ENCODE measurements at regions of chr11 and their contacts with region 1.

Region 1: DNA sequence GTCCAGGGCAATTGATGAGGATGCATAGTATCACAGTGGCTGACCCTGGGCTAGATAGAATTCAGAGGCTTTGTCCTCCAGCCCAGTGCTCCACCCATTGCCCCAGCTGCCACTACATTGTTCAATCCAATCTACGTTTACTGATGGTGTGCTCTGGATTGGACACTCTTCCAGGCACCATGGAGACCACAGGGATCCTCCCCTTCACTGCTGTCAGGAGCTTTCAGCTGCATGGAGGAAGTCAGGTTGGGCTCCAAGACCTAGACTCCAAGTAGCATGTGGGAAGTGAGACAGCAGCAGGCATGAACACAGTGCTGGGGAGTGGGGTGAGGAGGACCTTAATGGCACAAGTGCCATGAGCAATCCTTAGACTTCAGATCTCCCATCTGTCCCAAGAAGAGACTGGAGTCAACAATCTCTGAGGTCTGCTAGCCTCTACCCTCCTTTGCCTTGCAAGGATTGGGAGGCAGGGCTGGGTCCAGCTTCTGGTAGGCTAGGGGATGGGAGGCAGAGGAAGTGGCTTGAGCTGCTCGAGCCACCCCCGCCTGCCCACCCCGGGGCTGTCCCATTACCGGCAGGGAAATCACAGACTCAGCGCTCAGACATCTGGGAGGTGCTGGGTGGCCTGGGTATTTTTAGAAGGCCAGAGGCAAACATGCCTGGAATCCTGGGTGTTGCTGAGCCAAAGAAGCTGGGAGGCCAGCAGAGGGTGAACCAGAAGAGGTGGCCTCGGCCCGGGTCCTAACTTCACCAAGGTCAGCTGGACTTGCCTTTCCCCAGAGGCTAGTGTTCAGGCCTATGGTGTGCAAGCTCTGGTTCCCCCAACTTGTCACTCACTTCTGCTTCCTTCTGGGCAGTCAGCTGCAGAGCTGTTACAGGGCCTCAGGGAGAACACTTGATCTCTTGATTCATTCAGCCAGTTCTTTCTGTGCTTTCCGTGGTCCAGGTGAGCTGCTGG is 15.2 kb upstream of the FCHSD2 start:
- DNase-seq: peak; percentile 43
- H3K4me3 ChIP-seq: no peak overlapping the region
- H3K27me3 ChIP-seq: no peaks in the 10 kb centered on the region
- CTCF ChIP-seq: 0 out of 2 replicates have a peak, but pooled peaks have one; percentile 5

Region 2: DNA sequence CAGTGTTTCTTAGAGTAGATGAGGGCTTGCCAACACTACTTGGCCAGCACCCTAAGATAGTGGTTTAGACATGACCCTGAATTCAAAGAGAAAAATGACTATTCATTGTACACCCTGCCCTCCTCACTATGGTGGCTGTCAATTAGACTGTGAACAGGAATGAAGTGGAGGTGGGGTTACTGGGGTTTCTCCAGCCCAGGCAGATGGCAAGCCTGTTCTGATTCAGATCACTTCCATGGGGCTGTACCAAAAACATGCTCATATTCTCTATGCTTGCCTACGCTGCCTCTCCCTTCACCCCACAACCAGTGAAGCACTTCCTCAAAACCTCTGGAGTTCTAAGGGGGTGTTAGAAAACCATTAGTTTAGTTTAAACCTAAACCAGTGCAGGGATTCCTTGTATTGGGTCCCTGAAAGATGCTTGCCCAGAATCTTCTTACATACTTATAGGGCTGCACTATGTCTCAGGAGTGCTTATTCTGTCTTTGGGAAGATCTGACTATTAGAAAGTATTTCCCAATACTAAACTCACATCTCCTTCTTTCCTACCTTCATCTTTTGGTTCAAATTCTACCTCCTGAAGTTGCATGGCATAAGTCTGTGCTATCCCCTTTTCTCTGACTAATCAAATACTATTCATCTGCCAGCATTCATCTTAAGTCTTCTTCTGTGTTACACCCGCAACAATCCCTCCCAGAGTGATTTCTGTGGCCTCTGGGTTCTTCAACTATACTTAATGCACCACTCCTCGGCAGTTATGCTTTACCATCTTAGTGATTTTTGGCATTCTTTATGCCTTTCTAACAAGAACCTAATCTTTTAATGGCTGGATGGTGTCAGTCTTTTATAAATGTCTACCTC is 271.4 kb before region 1 on chr11:
- CTCF ChIA-PET with region 1: no interaction called
- POLR2A ChIA-PET with region 1: interaction called, 18 read pairs
- DNase-seq: no peak
- H3K4me3 ChIP-seq: no peak overlapping the region
- H3K27me3 ChIP-seq: no peaks in the 10 kb centered on the region
- CTCF ChIP-seq: no peak

Region 3: GRCh38 chr11:73141848-73142286 is 15.5 kb before region 1 on chr11:
- CTCF ChIA-PET with region 1: interaction called, 33 read pairs
- POLR2A ChIA-PET with region 1: interaction called, 16 read pairs
- DNase-seq: no peak
- H3K4me3 ChIP-seq: peak overlapping the region; percentile 95
- H3K27me3 ChIP-seq: no peaks in the 10 kb centered on the region
- CTCF ChIP-seq: 0 out of 2 replicates have a peak, but pooled peaks have one; percentile 7